ENCODE measurements at regions of chr12 and their contacts with region 1.

Region 1: DNA sequence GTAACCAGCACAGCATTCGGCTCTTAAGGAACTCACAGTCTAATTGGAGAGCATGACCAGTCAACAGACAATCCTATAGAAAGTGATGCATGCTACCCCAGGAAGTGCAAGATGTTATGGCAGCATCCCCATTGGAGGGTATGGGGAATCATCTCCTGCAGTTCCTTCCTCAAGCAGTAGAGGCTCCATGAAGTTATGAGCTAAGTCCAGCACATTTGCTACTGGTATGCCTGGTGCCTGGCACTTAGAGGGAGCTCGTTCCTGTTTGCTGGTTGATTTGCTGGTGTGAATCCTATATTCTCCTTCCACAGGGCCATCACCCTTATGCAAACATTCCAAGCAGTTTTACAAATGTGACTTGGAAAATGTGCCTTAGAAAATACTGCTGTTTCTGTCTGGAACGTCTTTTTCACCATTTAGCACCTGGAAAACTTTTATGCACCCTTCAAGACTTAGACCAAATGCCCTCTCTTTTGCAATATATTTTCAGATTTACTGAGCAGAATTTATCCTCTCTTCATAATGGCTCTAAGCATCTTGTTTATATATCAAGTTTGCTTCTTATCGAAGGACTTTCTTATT is 136.1 kb upstream of the WSCD2 start:
- DNase-seq: peak; percentile 49
- ATAC-seq: peak; percentile 98
- H3K4me3 ChIP-seq: no peak overlapping the region
- H3K27ac ChIP-seq: no peak overlapping the region
- H3K4me1 ChIP-seq: no peaks in the 10 kb centered on the region
- H3K27me3 ChIP-seq: no peaks in the 10 kb centered on the region
- CTCF ChIP-seq: peak; percentile 56
- EP300 ChIP-seq: no peak
- POLR2A ChIP-seq: no peak
- RAD21 ChIP-seq: no peak

Region 2: DNA sequence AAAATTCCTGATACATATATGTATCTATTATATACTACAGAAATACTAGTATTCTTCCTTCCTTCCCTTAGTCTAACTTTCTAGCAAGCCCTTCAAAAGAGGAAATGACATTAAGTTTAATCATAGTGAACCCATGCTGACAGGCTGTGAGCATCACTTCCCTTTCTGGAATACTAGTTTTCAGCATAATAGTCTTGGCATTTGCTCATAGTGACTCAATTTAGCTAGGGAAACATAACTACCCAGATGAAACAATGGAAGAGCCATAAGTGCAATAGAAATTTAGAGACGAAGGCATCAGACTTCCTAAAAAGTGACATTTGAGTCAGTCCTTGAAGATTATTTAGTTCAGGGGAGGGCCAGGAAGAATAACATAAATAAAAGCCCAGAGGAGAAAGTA is 715.1 kb before region 1 on chr12:
- CTCF ChIA-PET with region 1: no interaction called
- POLR2A ChIA-PET with region 1: no interaction called
- in situ Hi-C with region 1: no loop called
- intact Hi-C with region 1: no loop called
- DNase-seq: no peak
- ATAC-seq: no peak
- H3K4me3 ChIP-seq: no peak overlapping the region
- H3K27ac ChIP-seq: no peak overlapping the region
- H3K4me1 ChIP-seq: no peaks in the 10 kb centered on the region
- H3K27me3 ChIP-seq: 0 out of 5 replicates have a peak, but pooled peaks cover 0 to 4% of the 10 kb centered on the region in 2 experiments
- CTCF ChIP-seq: no peak
- EP300 ChIP-seq: no peak
- POLR2A ChIP-seq: no peak
- RAD21 ChIP-seq: no peak

Region 3: DNA sequence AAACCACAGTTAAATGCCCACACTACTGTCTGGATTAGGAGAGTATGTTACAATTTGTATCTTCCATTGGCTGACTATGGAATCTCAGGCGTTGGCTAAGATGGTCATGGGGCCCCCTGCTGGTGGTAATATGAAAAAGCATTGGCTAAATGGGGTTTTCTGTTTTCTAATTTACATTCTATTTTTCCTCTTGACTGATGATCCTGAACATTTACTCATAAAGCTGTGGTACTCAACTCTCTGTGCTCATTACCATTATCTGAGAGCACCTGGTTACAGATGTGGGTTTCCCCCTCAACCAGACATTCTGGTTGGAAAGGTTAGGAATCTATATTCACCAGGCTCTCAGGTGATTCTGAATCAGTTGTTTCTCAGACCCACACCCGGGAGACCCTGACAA is 201.0 kb after region 1 on chr12:
- CTCF ChIA-PET with region 1: interaction called, 12 read pairs
- POLR2A ChIA-PET with region 1: no interaction called
- in situ Hi-C with region 1: loop called (anchors 25 kb)
- intact Hi-C with region 1: loop called (anchors 1 kb)
- DNase-seq: peak; percentile 9
- ATAC-seq: no peak
- H3K4me3 ChIP-seq: no peak overlapping the region
- H3K27ac ChIP-seq: no peak overlapping the region
- H3K4me1 ChIP-seq: no peaks in the 10 kb centered on the region
- H3K27me3 ChIP-seq: no peaks in the 10 kb centered on the region
- CTCF ChIP-seq: peak; percentile 57
- EP300 ChIP-seq: no peak
- POLR2A ChIP-seq: no peak
- RAD21 ChIP-seq: peak; percentile 15; the same call in 1 of the 2 replicates

Region 4: DNA sequence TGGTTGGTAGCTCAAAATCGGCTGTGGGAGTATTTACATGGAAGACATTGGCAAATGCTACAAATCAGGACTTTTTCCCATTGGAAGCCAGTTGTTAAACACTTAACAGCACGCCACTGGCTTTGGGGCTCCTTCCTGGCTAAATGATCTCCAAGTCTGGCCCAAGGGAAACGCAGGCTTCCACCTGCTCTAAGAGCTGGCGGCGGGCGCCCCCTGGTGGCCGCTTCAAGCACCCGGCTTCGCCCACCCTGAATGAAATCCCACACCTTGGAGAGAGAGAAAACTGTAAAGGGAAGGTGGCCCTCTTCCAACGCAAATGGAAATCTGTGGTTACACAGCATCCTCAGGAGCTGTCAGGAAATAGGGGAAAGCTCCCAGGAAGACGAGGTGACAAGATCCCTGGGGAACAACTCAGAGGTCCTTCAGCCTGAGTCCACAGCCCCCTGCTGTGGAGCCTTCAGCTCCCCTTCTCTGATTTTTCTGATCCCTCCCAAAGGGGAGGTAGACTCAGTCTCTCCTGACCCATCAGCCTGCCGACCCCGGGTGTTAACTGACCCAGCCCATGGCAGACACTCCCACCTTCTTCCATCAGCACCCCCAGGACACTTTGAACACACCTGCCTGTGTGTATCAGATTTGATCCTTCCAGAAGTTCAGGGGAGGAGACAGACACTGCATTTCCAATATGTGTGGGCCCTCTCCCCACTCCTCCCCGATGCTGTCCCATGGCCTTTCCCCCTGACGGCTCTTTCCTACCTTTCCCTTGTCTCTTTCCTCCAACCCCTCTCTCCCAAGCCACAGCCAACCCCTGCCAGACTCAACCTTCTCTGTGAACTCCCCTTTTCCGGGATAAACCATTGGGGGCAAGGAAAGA is 625.4 kb after region 1 on chr12:
- CTCF ChIA-PET with region 1: no interaction called
- POLR2A ChIA-PET with region 1: no interaction called
- in situ Hi-C with region 1: no loop called
- intact Hi-C with region 1: loop called (anchors 1 kb)
- DNase-seq: peak; percentile 55
- ATAC-seq: peak; percentile 88
- H3K4me3 ChIP-seq: no peak overlapping the region
- H3K27ac ChIP-seq: no peak overlapping the region
- H3K4me1 ChIP-seq: peaks cover 20% of the 10 kb centered on the region
- H3K27me3 ChIP-seq: peaks cover 0 to 4% of the 10 kb centered on the region in 2 experiments; a peak in 1 of 5 replicates
- CTCF ChIP-seq: peak; percentile 89
- EP300 ChIP-seq: no peak
- POLR2A ChIP-seq: no peak
- RAD21 ChIP-seq: peak; percentile 90

Region 5: GRCh38 chr12:108667349-108667748 is 674.4 kb after region 1 on chr12:
- CTCF ChIA-PET with region 1: no interaction called
- POLR2A ChIA-PET with region 1: no interaction called
- in situ Hi-C with region 1: no loop called
- intact Hi-C with region 1: no loop called
- DNase-seq: peak; percentile 12
- ATAC-seq: no peak
- H3K4me3 ChIP-seq: no peak overlapping the region
- H3K27ac ChIP-seq: peak overlapping the region; percentile 73
- H3K4me1 ChIP-seq: peaks cover 54% of the 10 kb centered on the region
- H3K27me3 ChIP-seq: no peaks in the 10 kb centered on the region
- CTCF ChIP-seq: no peak
- EP300 ChIP-seq: no peak
- POLR2A ChIP-seq: no peak
- RAD21 ChIP-seq: no peak

Measured in HepG2 (cell line).